Mammary epithelial cell (primary cell): ENCODE measurements at regions of chr1 and their contacts with region 1.

Region 1: GRCh38 chr1:1441002-1441888 is 5.8 kb downstream of the VWA1 start:
- DNase-seq: no peak
- H3K4me3 ChIP-seq: no peak overlapping the region
- H3K27ac ChIP-seq: no peak overlapping the region
- H3K4me1 ChIP-seq: peaks cover 13% of the 10 kb centered on the region
- H3K27me3 ChIP-seq: no peaks in the 10 kb centered on the region
- CTCF ChIP-seq: peak; percentile 81 to 93

Region 2: DNA sequence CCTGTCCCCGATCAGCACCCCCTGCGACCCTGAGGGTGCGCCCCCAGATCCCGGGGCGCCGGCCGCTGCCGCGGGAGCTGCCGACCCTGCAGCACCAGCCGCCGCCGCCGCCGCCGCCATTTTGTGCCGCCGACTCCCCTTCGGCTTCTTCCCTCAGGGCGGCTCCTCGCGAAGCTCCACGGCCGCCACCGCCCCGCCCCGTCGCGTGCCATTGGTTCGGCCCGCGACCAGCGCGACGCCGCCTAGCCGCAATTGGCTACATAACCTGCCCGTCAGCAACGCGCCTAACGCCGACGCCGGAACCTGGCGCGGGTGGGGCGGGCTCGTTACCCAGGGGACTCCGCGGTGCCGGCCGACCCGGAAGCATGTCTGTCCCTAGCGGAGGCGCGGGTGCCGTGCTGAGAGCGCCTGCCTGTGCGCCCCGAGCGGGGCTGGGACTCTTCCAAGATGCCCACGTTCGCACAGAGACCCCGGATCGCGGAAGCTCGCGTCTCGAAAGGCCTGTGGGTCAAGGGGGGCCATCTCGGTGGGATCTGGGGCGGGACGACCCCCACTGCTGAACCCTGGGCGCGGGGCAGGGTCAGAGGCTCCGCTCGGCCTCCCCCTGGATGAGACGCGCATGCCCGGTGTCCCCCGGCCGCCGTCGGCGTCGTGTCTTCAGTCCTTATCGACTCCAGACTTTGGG is 41.9 kb before region 1 on chr1 and contains the start of gene CCNL2:
- CTCF ChIA-PET with region 1: no interaction called
- dilution Hi-C with region 1: no loop called
- in situ Hi-C with region 1: no loop called
- intact Hi-C with region 1: loop called (anchors 2 kb)
- DNase-seq: peak; percentile 98
- H3K4me3 ChIP-seq: peak within 1 kb of the TSS; percentile 88 to 99 (median 95)
- H3K27ac ChIP-seq: peak within 1 kb of the TSS; percentile 62
- H3K4me1 ChIP-seq: peaks cover 30% of the 10 kb centered on the region
- H3K27me3 ChIP-seq: no peaks in the 10 kb centered on the region
- CTCF ChIP-seq: peak; percentile 42 to 69
- total RNA-seq, gene CCNL2: 103 to 140 TPM

Region 3: DNA sequence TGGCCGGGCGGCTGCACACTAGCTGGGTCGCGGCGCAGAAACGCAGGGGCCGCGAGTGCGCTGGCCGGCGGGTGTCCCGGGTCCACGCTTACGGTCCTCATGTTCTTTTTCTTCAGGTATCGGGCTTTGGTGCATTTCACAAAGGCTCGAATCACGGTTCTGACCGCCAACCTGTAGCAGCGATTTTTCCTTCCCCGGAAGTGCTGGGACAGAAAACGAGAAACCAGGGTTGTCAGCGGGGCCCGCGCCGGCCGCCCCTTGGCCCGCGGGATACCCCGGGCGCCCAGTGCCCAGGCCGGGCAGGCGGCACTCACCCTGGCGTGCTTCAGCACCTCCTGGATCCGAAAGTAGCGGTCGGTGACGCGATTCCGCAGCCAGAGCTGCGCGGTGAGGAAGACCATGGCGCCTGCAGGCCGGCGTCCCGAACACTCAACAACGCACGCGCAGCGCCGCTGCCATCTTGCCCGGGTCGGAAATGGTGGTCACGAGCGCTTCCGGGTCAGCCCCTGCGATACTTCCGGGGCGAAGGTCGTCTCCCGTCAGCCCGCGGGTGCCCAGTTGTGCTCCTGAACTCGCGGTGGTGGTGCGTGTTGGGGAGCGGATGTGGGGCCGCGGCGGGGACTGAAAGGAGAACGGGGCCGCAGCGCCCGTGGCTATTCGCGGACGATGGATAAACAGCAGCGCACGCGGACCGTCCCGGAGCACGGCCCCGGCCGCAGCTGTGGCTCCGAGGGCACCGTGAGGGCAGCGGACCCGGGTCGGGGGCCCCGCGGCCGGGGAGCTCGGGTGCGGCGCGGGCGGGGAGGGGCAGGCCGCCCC is 34.2 kb before region 1 on chr1 and contains the start of gene MRPL20:
- CTCF ChIA-PET with region 1: no interaction called
- dilution Hi-C with region 1: no loop called
- in situ Hi-C with region 1: no loop called
- intact Hi-C with region 1: loop called (anchors 2 kb)
- DNase-seq: peak; percentile 90
- H3K4me3 ChIP-seq: peak within 1 kb of the TSS; percentile 59 to 100 (median 99)
- H3K27ac ChIP-seq: peak within 1 kb of the TSS; percentile 57
- H3K4me1 ChIP-seq: peaks cover 18% of the 10 kb centered on the region
- H3K27me3 ChIP-seq: no peaks in the 10 kb centered on the region
- CTCF ChIP-seq: no peak
- total RNA-seq, gene MRPL20: 56.7 to 115 TPM

Region 4: DNA sequence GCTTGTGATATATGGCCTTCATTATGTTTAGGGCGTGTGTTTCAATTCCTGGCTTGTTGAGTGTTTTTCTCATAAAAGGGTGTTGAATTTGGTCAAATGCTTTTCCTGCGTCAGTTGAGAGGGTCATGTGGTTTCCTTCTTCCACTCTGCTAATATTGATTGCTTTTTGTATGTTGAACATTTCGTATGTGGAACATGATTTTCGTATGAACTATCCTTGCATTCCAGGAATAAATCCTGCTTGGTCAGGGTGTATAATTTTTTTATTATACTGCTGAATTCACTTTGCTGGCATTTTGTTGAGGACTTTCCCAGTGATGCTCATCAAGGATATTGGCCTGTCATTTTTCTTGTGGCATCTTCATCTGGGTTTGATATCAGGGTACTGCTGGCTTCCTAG is 66.1 kb after region 1 on chr1:
- CTCF ChIA-PET with region 1: interaction called, 10 read pairs
- dilution Hi-C with region 1: no loop called
- in situ Hi-C with region 1: no loop called
- intact Hi-C with region 1: loop called (anchors 2 kb)
- DNase-seq: no peak
- H3K4me3 ChIP-seq: no peak overlapping the region
- H3K27ac ChIP-seq: no peak overlapping the region
- H3K4me1 ChIP-seq: peaks cover 16% of the 10 kb centered on the region
- H3K27me3 ChIP-seq: no peaks in the 10 kb centered on the region
- CTCF ChIP-seq: no peak